ENCODE measurements at regions of chr12 and their contacts with region 1.

Region 1: DNA sequence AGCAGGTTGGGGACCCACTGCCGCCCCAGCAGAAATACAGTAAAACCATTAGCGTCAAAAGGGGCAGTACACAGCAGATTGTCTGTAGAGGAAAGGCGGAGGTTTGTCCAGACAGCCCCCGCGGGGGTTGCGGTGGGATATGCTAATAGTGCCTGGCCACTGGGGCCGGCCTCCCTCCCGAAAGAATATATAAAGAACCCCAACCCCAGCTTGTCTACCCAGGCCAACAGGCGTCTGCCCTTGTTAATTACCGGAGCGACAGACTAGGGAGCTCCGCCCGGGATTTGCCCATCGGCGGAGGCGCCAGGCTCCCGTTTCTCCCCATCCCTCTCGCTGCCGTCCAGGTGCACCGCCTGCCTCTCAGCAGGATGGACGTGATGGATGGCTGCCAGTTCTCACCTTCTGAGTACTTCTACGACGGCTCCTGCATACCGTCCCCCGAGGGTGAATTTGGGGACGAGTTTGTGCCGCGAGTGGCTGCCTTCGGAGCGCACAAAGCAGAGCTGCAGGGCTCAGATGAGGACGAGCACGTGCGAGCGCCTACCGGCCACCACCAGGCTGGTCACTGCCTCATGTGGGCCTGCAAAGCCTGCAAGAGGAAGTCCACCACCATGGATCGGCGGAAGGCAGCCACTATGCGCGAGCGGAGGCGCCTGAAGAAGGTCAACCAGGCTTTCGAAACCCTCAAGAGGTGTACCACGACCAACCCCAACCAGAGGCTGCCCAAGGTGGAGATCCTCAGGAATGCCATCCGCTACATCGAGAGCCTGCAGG is at the start of gene MYF5:
- DNase-seq: peak in 1 of 2 donors; percentile 44
- ATAC-seq: peak in 1 of 4 donors; percentile 17
- H3K4me3 ChIP-seq: peak within 1 kb of the TSS; percentile 26
- H3K27ac ChIP-seq: no peak within 1 kb of the TSS
- H3K4me1 ChIP-seq: peaks cover 15% of the 10 kb centered on the region
- H3K27me3 ChIP-seq: no peaks in the 10 kb centered on the region
- CTCF ChIP-seq: no peak
- total RNA-seq, gene MYF5: 2.3 to 4.7 (median 3.5) TPM

Region 2: DNA sequence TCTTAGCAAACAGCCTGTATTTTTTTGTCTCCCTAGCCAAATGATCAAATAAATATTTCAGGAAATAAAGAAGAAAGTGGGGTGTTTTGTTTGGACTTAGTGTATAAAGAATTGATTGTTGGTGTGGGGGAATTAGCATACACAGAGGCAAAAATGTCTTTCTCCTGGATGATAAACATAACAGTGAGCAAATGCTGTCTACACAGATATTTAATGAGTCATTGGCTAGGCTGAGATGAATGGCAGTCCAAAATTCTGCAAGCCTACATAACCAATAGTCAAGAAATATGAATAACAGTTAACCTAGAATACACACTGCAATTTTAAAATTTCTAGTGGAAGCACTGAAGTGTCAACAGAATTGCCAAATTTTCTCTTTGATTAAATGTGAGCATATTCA is 35.6 kb after region 1 on chr12:
- intact Hi-C with region 1: loop called in 1 of 2 experiments (anchors 5 kb)
- DNase-seq: no peak
- ATAC-seq: no peak
- H3K4me3 ChIP-seq: no peak overlapping the region
- H3K27ac ChIP-seq: no peak overlapping the region
- H3K4me1 ChIP-seq: peaks cover 5% of the 10 kb centered on the region
- H3K27me3 ChIP-seq: no peaks in the 10 kb centered on the region
- CTCF ChIP-seq: no peak

Measured in psoas muscle (tissue), 8 donors.